OCI-LY7 (cell line): ENCODE measurements at regions of chr4 and their contacts with region 1.

Region 1: DNA sequence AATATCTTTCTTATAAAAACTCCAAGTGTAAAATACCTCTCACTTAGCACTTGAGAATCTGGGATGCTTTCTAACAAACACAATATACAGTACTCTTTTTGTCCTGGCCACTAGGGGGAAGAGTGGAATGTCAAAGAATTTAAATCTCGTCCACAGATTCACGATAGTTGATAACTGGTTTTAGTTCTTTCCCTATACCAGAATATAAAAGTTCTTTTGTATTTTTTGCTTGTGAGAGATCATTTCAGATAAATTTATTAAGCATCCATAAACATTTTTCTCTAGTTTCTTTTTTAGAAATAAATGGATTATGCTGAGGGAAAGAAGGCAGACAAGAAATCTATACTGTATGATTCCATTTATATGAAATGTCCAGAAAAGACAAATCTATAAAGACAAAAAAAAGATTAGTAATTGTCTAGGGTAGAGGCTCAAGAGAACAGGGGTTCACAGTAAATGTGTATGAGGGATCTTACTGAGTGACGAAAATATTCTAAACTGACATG is 50.4 kb downstream of the MGARP start:
- DNase-seq: peak; percentile 75
- H3K4me3 ChIP-seq: no peak overlapping the region
- H3K27ac ChIP-seq: peak overlapping the region; percentile 29
- H3K4me1 ChIP-seq: peaks cover 76% of the 10 kb centered on the region
- CTCF ChIP-seq: peak; percentile 88

Region 2: DNA sequence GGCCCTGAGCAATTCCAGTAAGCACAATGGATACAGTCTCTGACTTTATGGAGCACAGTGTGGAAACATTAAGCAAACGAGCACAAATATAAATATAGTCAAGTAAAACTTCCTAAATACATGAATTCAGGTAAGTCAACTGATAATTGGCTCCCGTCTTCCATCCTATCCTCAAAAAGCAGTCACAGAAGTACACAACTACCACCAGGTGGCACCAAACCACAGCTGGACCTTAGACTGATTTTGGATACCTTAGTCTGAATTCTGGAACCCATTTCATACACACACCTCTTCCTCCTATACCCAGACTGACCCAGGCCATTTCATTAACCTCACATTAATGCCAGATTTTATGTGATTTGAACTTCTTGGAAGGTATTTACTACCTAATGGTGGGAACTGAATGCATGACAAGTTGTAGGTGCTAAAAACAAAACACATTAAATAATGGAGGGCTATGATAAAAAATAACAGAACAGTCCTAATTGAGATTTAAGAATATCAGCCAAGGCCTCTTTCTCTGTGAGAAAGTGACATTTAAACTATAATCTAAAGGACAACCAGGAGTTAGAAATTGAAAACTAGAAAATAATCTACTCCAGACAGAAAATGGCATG is 130.1 kb before region 1 on chr4:
- CTCF ChIA-PET with region 1: no interaction called
- POLR2A ChIA-PET with region 1: no interaction called
- intact Hi-C with region 1: loop called (anchors 1 kb)
- DNase-seq: peak; percentile 90
- H3K4me3 ChIP-seq: no peak overlapping the region
- H3K27ac ChIP-seq: no peak overlapping the region
- H3K4me1 ChIP-seq: peaks cover 4% of the 10 kb centered on the region
- CTCF ChIP-seq: peak; percentile 97

Region 3: DNA sequence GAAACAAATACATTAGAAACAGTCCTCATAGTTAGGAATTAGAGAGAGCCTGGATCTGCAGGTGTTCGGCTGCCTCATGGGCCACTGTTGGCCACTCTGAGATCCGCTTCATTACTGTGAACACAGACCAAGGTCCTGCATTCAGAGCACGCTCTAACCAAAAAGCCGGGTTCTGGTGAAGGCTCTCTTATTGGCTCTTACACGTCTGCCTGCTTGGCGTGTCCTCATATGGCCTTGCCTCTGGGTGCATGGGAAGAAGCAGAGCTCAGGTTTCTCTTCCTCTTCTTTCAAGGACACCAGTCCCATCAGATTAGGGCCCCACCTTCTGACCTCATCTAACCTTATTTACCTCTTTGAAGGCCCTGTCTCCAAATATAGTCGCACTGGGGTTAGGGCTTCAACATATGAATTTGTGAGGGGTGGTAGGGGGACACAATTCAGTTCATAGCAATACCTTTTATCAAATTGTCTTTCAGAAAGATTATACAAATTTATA is 15.5 kb before region 1 on chr4:
- CTCF ChIA-PET with region 1: no interaction called
- POLR2A ChIA-PET with region 1: interaction called, 22 read pairs
- intact Hi-C with region 1: no loop called
- DNase-seq: peak; percentile 94
- H3K4me3 ChIP-seq: peak overlapping the region; percentile 11
- H3K27ac ChIP-seq: peak overlapping the region; percentile 82
- H3K4me1 ChIP-seq: peaks cover 37% of the 10 kb centered on the region
- CTCF ChIP-seq: no peak

Region 4: GRCh38 chr4:139253713-139254112 is 24.1 kb after region 1 on chr4:
- CTCF ChIA-PET with region 1: interaction called, 4 read pairs
- POLR2A ChIA-PET with region 1: interaction called, 19 read pairs
- intact Hi-C with region 1: no loop called
- DNase-seq: no peak
- H3K4me3 ChIP-seq: no peak overlapping the region
- H3K27ac ChIP-seq: peak overlapping the region; percentile 45
- H3K4me1 ChIP-seq: peaks cover 42% of the 10 kb centered on the region
- CTCF ChIP-seq: no peak

Region 5: GRCh38 chr4:139286186-139286698 is 56.7 kb after region 1 on chr4:
- CTCF ChIA-PET with region 1: no interaction called
- POLR2A ChIA-PET with region 1: interaction called, 10 read pairs
- intact Hi-C with region 1: no loop called
- DNase-seq: no peak
- H3K4me3 ChIP-seq: no peak overlapping the region
- H3K27ac ChIP-seq: no peak overlapping the region
- H3K4me1 ChIP-seq: peaks cover 8% of the 10 kb centered on the region
- CTCF ChIP-seq: no peak

Region 6: GRCh38 chr4:139301113-139301820 is 71.7 kb after region 1 on chr4 and contains the start of gene NAA15:
- CTCF ChIA-PET with region 1: interaction called, 11 read pairs
- POLR2A ChIA-PET with region 1: interaction called, 11 read pairs
- intact Hi-C with region 1: no loop called
- DNase-seq: peak; percentile 99
- H3K4me3 ChIP-seq: peak within 1 kb of the TSS; percentile 84
- H3K27ac ChIP-seq: peak within 1 kb of the TSS; percentile 89
- H3K4me1 ChIP-seq: peaks cover 38% of the 10 kb centered on the region
- CTCF ChIP-seq: no peak
- total RNA-seq, gene NAA15: 45.3 and 50.1 TPM in 2 replicates

Region 7: GRCh38 chr4:139554893-139555704 is 325.5 kb after region 1 on chr4:
- CTCF ChIA-PET with region 1: no interaction called
- POLR2A ChIA-PET with region 1: interaction called, 4 read pairs
- intact Hi-C with region 1: loop called (anchors 5 kb)
- DNase-seq: peak; percentile 91
- H3K4me3 ChIP-seq: peak overlapping the region; percentile 81
- H3K27ac ChIP-seq: peak overlapping the region; percentile 87
- H3K4me1 ChIP-seq: peaks cover 72% of the 10 kb centered on the region
- CTCF ChIP-seq: no peak